ENCODE measurements at regions of chr2 and their contacts with region 1.

Region 1: DNA sequence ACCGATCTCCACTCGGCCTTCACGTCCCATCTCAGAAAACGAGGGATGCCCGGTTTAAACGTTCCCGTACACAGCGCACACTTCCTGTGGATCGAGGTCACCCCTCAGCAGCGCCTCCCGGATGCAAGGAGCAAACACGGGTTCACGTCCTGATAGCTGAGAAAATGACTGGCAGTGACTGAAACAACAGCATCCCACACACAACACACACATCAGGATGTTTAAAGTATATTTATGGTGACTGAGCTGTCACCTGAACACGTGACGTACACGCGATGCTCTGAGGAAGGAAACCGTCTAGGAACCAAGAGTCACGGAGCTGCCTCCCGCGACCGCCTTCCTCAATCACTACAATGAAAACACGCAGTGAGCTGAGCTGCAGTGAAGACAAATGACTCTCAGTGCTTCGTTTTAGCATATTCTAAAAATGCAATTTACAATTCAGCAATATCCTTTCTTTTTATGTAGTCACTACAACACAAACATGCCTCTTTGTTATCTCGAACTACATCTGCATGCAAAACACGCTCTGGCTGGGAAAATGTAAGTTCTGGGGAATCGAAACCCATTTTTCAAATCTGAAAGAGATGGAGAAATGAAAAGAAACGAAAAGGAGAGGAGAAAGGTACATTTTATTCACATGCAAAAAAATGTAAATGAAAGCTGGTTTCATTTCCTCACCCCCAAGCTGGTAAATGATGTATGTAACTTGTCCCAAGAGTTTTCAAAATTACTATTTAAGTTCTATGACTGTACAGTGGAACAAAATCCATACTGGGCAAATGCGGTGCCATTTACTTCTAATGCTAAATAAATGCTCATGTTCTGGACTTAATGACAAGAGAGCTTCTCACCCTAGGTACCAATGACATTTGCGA is 19.8 kb downstream of the HDAC4 start:
- DNase-seq: peak; percentile 85
- H3K4me3 Mint-ChIP-seq: peak overlapping the region; percentile 65
- H3K27ac Mint-ChIP-seq: peak overlapping the region; percentile 94
- H3K4me1 Mint-ChIP-seq: peaks cover 41% of the 10 kb centered on the region
- H3K27me3 Mint-ChIP-seq: no peaks in the 10 kb centered on the region

Region 2: GRCh38 chr2:239216614-239217273 is 164.3 kb before region 1 on chr2:
- CTCF ChIA-PET with region 1: no interaction called
- POLR2A ChIA-PET with region 1: no interaction called
- intact Hi-C with region 1: loop called (anchors 1 kb)
- DNase-seq: peak; percentile 69
- H3K4me3 Mint-ChIP-seq: peak overlapping the region; percentile 74
- H3K27ac Mint-ChIP-seq: peak overlapping the region; percentile 88
- H3K4me1 Mint-ChIP-seq: peaks cover 64% of the 10 kb centered on the region
- H3K27me3 Mint-ChIP-seq: no peaks in the 10 kb centered on the region

Region 3: GRCh38 chr2:239267288-239267951 is 113.7 kb before region 1 on chr2:
- CTCF ChIA-PET with region 1: interaction called, 12 read pairs
- POLR2A ChIA-PET with region 1: interaction called, 10 read pairs
- intact Hi-C with region 1: loop called (anchors 1 kb)
- DNase-seq: peak; percentile 96
- H3K4me3 Mint-ChIP-seq: peak overlapping the region; percentile 78
- H3K27ac Mint-ChIP-seq: peak overlapping the region; percentile 93
- H3K4me1 Mint-ChIP-seq: peaks cover 75% of the 10 kb centered on the region
- H3K27me3 Mint-ChIP-seq: peaks cover 15% of the 10 kb centered on the region

Region 4: DNA sequence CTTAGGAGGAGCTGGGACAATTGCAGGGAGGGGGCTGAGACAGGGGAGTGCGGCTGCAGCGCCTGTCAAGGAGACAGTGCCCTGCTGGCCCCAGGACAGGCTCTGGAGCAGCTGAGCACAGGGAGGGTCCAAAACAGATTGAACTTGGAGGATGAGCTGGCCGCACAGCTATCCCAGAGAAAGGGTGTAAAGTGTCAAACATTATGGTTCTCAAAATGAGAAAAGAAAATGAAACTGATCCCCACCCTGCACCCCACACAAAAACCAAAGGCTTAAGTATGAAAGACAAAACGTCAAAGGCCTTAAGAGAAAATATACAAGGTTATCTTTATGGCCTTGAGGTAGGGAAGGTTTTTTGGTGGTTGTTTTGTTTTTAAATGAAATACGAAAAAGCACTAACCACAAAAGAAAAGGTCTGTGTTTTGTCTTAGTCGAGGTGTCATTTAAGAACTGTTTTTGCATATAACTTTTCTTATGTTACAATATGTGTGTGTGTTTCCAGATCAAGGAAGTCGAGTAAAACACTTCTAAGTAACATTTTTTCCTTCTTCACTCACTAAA is 92.0 kb before region 1 on chr2:
- CTCF ChIA-PET with region 1: interaction called, 4 read pairs
- POLR2A ChIA-PET with region 1: interaction called, 8 read pairs
- intact Hi-C with region 1: loop called (anchors 1 kb)
- DNase-seq: peak; percentile 70
- H3K4me3 Mint-ChIP-seq: peak overlapping the region; percentile 44
- H3K27ac Mint-ChIP-seq: peak overlapping the region; percentile 82
- H3K4me1 Mint-ChIP-seq: peaks cover 80% of the 10 kb centered on the region
- H3K27me3 Mint-ChIP-seq: peaks cover 9% of the 10 kb centered on the region

Region 5: GRCh38 chr2:239311132-239312040 is 69.7 kb before region 1 on chr2:
- CTCF ChIA-PET with region 1: no interaction called
- POLR2A ChIA-PET with region 1: no interaction called
- intact Hi-C with region 1: no loop called
- DNase-seq: peak; percentile 3
- H3K4me3 Mint-ChIP-seq: no peak overlapping the region
- H3K27ac Mint-ChIP-seq: no peak overlapping the region
- H3K4me1 Mint-ChIP-seq: peaks cover 16% of the 10 kb centered on the region
- H3K27me3 Mint-ChIP-seq: no peaks in the 10 kb centered on the region

Region 6: DNA sequence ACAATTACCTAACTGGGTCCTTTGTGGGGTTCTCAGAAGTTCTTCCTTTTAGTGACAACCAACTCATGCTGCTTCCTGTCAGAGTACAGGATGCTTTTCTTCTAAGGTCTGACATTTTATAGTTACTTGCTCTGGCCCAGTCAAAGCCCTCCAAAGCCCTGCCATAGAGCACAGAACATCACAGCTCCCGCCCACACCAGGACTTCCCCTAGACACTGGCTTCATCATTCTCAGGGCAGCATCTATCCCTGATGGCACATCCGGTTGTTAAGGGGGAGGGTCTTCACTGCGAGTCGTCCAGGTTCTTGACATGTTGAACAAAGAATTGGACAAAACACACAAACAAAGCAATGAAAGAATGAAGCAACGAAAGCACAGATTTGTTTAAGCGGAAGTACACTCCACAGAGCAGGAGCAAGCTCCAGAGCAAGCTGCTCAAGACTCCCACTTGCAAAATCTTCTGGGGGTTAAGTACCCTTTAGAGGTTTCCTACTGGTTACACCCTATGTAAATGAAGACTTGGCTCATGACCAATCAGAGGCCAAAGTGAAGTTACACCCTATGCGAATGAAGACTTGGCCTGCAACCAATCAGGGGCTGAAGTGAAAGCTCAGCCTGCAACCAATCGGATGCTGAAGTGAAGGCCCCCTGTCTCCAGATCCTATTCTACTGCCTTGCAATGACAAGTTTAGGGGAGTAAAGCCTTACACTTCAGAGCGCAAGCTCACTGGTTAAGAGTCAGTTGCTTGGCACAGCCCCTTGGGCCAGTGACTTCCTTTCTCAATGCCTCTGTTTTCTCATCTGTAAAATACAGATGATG is 59.3 kb before region 1 on chr2:
- CTCF ChIA-PET with region 1: interaction called, 3 read pairs
- POLR2A ChIA-PET with region 1: no interaction called
- intact Hi-C with region 1: loop called (anchors 1 kb)
- DNase-seq: peak; percentile 86
- H3K4me3 Mint-ChIP-seq: peak overlapping the region; percentile 50
- H3K27ac Mint-ChIP-seq: peak overlapping the region; percentile 89
- H3K4me1 Mint-ChIP-seq: peaks cover 76% of the 10 kb centered on the region
- H3K27me3 Mint-ChIP-seq: no peaks in the 10 kb centered on the region

Region 7: GRCh38 chr2:239361311-239361642 is 19.8 kb before region 1 on chr2:
- CTCF ChIA-PET with region 1: interaction called, 3 read pairs
- POLR2A ChIA-PET with region 1: no interaction called
- intact Hi-C with region 1: loop called (anchors 2 kb)
- DNase-seq: no peak
- H3K4me3 Mint-ChIP-seq: no peak overlapping the region
- H3K27ac Mint-ChIP-seq: no peak overlapping the region
- H3K4me1 Mint-ChIP-seq: peaks cover 17% of the 10 kb centered on the region
- H3K27me3 Mint-ChIP-seq: no peaks in the 10 kb centered on the region

Region 8: DNA sequence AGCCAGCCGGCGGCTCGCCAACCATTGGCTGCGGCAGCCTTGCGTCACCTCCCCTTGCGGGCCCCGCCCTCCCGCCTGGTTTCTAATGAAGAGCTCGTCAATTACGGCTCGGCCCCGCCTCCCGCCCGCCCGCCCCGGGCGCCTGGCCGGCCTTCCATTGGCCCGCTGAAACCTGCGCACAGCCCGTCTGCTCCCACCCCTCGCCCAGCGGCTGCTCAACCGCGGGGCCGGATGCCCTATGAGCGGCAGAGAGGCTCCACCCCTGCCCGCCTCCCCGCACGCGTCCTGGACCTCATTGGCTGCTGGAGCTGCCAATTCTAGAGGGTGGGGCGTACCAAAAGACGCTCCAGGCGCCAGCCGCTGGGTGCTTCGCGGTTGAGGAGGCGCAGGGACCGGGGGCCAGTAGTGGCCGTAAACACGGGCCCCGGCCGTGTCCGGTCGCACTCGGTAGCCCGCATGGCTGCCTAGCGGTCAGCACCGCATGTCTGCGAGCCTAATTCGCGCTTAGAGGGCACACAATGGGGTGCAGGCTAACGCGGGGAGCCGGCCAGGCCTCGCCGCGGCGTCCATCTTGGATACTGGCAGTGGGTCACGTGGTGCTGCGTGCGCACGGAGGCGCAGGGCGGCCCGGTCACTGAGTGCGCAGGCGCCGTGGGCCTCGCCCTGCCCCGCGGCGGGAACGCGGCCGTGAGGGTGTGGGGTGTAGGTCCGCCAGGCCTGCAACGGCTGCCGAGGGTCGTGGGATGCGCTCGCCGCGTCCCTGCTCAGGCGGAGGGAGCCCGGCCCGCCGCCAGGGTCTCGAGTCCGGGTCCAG is 20.2 kb after region 1 on chr2:
- CTCF ChIA-PET with region 1: interaction called, 5 read pairs
- POLR2A ChIA-PET with region 1: interaction called, 19 read pairs
- intact Hi-C with region 1: loop called (anchors 1 kb)
- DNase-seq: peak; percentile 99
- H3K4me3 Mint-ChIP-seq: peak overlapping the region; percentile 89
- H3K27ac Mint-ChIP-seq: peak overlapping the region; percentile 97
- H3K4me1 Mint-ChIP-seq: peaks cover 35% of the 10 kb centered on the region
- H3K27me3 Mint-ChIP-seq: no peaks in the 10 kb centered on the region